Activated B cell treated with CpG ODN at 0.5 μM for 24 hours (primary cell): ENCODE measurements at regions of chr3 and their contacts with region 1.

Region 1: DNA sequence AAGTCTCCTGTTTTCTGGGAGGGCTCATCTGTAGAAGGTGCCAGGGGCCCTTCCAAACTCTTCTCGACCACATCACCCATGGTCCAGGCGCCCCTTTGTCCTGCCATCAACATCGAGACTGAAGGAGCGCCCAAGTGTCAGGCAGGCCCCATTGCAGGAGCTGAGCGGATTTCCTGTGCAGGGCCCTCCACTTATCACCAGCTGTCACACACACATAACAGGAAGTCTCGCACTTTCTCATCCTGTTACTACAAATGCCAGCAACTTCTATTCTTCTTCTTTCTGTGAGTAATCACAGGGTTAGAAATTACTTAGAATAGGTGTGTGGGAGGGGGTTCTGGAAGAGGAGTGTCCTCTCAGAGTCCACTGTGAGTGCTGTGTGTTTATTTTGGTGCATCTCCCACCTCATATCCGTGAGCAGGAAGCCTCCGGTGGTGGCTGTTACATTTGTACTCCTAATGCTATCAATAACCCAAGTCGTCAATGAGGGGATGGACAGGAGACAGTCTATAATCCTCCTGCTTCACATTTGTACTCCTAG is at the start of gene KLHL6:
- DNase-seq: peak; percentile 51
- ATAC-seq: peak; percentile 81
- H3K4me3 Mint-ChIP-seq: peak within 1 kb of the TSS; percentile 98
- H3K27ac Mint-ChIP-seq: peak within 1 kb of the TSS; percentile 99
- H3K4me1 Mint-ChIP-seq: peaks cover 54% of the 10 kb centered on the region
- H3K27me3 Mint-ChIP-seq: no peaks in the 10 kb centered on the region
- CTCF ChIP-seq: no peak
- total RNA-seq, gene KLHL6: 34.6 and 41.7 TPM in 2 replicates

Region 2: DNA sequence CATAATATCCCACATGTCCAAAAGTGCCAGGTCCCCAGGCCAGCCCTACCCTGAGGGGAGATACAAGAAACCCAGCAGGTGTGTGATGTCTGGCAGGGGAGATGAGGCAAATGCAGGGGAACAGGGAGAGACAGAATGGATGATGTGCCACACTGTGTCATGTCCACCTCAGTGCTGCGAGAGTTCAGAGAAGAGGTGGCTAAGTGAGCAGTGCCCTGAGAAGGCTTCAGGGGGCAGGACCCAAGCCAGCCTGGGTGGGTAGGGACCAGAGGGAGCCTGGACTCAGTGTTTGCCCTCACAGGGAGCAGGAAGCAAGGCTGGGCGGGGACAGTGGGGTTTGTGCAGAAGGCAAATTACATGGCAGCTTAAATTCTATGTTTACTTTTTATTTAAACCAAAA is 61.3 kb before region 1 on chr3:
- CTCF ChIA-PET with region 1: no interaction called
- POLR2A ChIA-PET with region 1: no interaction called
- intact Hi-C with region 1: no loop called
- DNase-seq: no peak
- ATAC-seq: no peak
- H3K4me3 Mint-ChIP-seq: no peak overlapping the region
- H3K27ac Mint-ChIP-seq: peak overlapping the region; percentile 24
- H3K4me1 Mint-ChIP-seq: peaks cover 7% of the 10 kb centered on the region
- H3K27me3 Mint-ChIP-seq: no peaks in the 10 kb centered on the region
- CTCF ChIP-seq: no peak

Region 3: GRCh38 chr3:183515968-183516851 is 39.4 kb before region 1 on chr3:
- CTCF ChIA-PET with region 1: interaction called, 5 read pairs
- POLR2A ChIA-PET with region 1: interaction called, 4 read pairs
- intact Hi-C with region 1: loop called (anchors 1 kb)
- DNase-seq: no peak
- ATAC-seq: peak; percentile 68
- H3K4me3 Mint-ChIP-seq: peak overlapping the region; percentile 54
- H3K27ac Mint-ChIP-seq: peak overlapping the region; percentile 90
- H3K4me1 Mint-ChIP-seq: peaks cover 76% of the 10 kb centered on the region
- H3K27me3 Mint-ChIP-seq: no peaks in the 10 kb centered on the region
- CTCF ChIP-seq: no peak

Region 4: DNA sequence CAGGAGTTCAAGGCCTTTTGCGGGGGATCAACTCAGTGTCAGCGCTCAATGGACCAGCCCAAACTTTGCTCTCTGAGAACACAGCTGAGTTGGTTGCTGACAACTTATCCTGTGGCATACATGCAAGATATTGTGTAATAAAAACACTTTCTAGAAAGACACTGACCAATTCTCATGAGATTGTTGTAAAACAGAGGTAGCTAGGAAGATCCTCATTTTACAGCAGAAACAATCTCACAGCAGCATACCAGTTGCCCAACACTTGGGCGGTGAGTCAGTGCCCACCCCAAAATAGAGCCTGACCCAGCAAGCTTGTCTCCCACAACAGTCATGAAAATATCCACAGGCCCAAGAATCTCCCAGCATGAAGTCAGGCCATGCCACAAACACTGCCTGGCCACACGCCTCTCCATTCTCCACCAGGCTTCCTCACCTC is 18.3 kb before region 1 on chr3:
- CTCF ChIA-PET with region 1: interaction called, 7 read pairs
- POLR2A ChIA-PET with region 1: interaction called, 33 read pairs
- intact Hi-C with region 1: loop called (anchors 1 kb)
- DNase-seq: no peak
- ATAC-seq: no peak
- H3K4me3 Mint-ChIP-seq: peak overlapping the region; percentile 39
- H3K27ac Mint-ChIP-seq: peak overlapping the region; percentile 78
- H3K4me1 Mint-ChIP-seq: peaks cover 94% of the 10 kb centered on the region
- H3K27me3 Mint-ChIP-seq: no peaks in the 10 kb centered on the region
- CTCF ChIP-seq: no peak

Region 5: GRCh38 chr3:183591881-183592521 is 36.4 kb after region 1 on chr3:
- CTCF ChIA-PET with region 1: interaction called, 3 read pairs
- POLR2A ChIA-PET with region 1: interaction called, 5 read pairs
- intact Hi-C with region 1: loop called (anchors 1 kb)
- DNase-seq: no peak
- ATAC-seq: peak; percentile 80
- H3K4me3 Mint-ChIP-seq: peak overlapping the region; percentile 59
- H3K27ac Mint-ChIP-seq: peak overlapping the region; percentile 83
- H3K4me1 Mint-ChIP-seq: peaks cover 47% of the 10 kb centered on the region
- H3K27me3 Mint-ChIP-seq: peaks cover 3% of the 10 kb centered on the region
- CTCF ChIP-seq: peak; percentile 42

Region 6: GRCh38 chr3:183766745-183767606 is 211.4 kb after region 1 on chr3:
- CTCF ChIA-PET with region 1: interaction called, 11 read pairs
- POLR2A ChIA-PET with region 1: interaction called, 4 read pairs
- intact Hi-C with region 1: no loop called
- DNase-seq: peak; percentile 32
- ATAC-seq: peak; percentile 86
- H3K4me3 Mint-ChIP-seq: no peak overlapping the region
- H3K27ac Mint-ChIP-seq: no peak overlapping the region
- H3K4me1 Mint-ChIP-seq: peaks cover 9% of the 10 kb centered on the region
- H3K27me3 Mint-ChIP-seq: no peaks in the 10 kb centered on the region
- CTCF ChIP-seq: no peak